K562 (cell line): ENCODE measurements at regions of chr6 and their contacts with region 1.

Region 1: GRCh38 chr6:11093589-11094410 is at the start of gene SMIM13:
- DNase-seq: peak; percentile 95 to 99 (median 96)
- ATAC-seq: peak; percentile 95
- H3K4me3 ChIP-seq: peak within 1 kb of the TSS; percentile 68
- H3K27ac ChIP-seq: peak within 1 kb of the TSS; percentile 91
- H3K4me1 ChIP-seq: peaks cover 12 to 15% of the 10 kb centered on the region in 2 experiments
- H3K27me3 ChIP-seq: no peaks in the 10 kb centered on the region
- CTCF ChIP-seq: peak; percentile 46 to 64 (median 57); a peak in 5 of 6 replicates
- EP300 ChIP-seq: no peak
- POLR2A ChIP-seq: peak; percentile 90
- RAD21 ChIP-seq: peak; percentile 5 to 31; a peak in 1 of 4 replicates
- polyA plus RNA-seq, gene SMIM13: 5.5 to 7.2 TPM

Region 2: DNA sequence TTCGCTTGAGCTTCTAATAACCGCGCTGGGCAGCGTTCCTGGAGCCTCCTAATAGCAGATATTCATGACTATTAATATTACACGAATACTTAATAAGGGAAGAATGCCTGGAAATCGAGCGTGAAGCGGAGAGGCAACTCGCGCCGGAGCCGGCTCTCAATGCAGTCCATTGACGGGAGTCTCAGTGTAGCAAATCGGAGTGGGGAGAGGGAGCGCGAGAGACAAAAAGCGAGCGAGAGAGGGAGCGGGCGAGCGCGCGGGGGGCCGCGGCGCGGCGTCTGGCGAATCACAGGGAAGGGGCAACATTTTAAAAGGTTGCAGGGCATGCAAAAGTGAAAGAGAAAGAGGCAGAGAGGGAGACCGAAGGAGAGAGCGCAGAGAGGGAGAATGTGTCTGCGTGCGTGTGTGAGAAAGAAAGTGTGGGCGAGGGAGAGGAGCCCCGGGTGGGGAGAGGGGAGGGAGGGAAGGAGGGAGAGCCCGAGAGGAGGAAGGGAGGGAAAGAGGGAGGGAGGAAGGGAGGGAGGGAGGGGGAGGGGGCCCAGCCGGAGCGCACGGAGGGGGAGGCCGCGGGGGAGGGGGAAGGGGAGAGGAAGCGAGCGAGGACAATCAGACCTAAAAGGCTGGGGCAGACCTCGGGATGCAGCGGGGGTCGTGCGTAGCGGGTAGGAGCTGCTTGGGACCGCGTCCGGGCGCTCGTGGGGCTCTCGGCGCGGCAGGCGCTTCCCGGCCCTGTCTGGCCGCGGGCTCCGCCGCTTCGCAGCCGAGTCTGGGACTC is 681.6 kb before region 1 on chr6:
- CTCF ChIA-PET with region 1: no interaction called
- POLR2A ChIA-PET with region 1: no interaction called
- in situ Hi-C with region 1: no loop called
- intact Hi-C with region 1: no loop called
- DNase-seq: peak in 1 of 4 experiments; percentile 31
- ATAC-seq: peak; percentile 65
- H3K4me3 ChIP-seq: peak overlapping the region; percentile 30
- H3K27ac ChIP-seq: no peak overlapping the region
- H3K4me1 ChIP-seq: peaks cover 0 to 45% of the 10 kb centered on the region in 2 experiments; a peak in 3 of 5 replicates
- H3K27me3 ChIP-seq: peaks cover 13 to 40% of the 10 kb centered on the region in 2 experiments; a peak in 4 of 5 replicates
- CTCF ChIP-seq: no peak
- EP300 ChIP-seq: no peak
- POLR2A ChIP-seq: no peak
- RAD21 ChIP-seq: no peak

Region 3: DNA sequence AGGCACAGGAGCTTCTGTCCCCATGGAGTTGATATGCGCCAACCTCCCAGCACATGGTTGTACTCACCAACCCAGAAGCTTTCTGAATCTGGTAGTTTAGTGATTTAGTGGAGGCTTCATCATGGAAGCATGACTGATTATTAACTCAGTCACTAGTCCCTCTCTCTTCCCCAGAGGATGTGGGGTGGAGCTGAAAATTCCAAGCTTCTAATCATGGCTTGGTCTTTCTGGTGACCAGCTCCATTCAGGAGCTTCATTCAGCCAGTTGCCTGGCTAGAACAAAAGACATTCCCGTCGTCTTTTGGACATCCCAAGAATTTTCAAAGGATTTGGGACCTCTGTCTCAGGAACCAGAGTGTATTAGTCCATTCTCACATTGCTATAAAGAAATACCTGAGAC is 13.5 kb before region 1 on chr6:
- CTCF ChIA-PET with region 1: no interaction called
- POLR2A ChIA-PET with region 1: interaction called, 16 read pairs
- in situ Hi-C with region 1: no loop called
- intact Hi-C with region 1: no loop called
- DNase-seq: no peak
- ATAC-seq: no peak
- H3K4me3 ChIP-seq: no peak overlapping the region
- H3K27ac ChIP-seq: no peak overlapping the region
- H3K4me1 ChIP-seq: no peaks in the 10 kb centered on the region; a peak in 1 of 5 replicates
- H3K27me3 ChIP-seq: no peaks in the 10 kb centered on the region
- CTCF ChIP-seq: no peak
- EP300 ChIP-seq: no peak
- POLR2A ChIP-seq: no peak
- RAD21 ChIP-seq: no peak

Region 4: DNA sequence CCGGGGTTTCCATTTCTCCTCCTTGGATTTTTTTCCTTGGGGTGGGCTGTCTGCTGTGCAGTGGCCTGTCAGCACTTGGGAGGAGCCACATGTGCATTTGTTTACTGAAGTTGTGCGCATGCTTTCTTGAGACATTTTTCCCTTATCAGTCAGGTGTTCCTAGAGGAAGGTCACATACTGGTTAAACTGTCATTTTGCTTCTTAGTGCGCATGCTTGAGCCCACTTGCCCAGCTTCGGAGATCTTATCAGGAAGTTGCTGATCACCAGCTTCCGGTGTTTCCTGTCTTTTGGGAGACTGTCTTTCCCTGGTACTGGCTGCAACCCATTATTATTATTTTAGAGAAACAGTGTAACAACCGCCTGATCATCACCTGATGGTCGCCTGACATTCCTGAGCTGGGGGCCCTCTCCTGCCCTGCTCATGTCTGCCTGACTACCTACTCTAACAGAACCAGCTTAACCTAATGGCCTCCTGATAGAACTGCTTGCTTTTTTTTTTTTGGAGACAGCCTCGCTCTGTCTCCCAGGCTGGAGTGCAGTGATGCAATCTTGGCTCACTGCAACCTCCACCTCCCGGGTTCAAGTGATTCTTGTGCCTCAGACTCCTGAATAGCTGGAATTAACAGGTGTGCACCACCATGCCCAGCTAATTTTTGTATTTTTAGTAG is 18.1 kb after region 1 on chr6:
- CTCF ChIA-PET with region 1: interaction called, 3 read pairs
- POLR2A ChIA-PET with region 1: interaction called, 24 read pairs
- in situ Hi-C with region 1: no loop called
- intact Hi-C with region 1: no loop called
- DNase-seq: peak; percentile 41 to 72 (median 50)
- ATAC-seq: peak; percentile 82
- H3K4me3 ChIP-seq: peak overlapping the region; percentile 9
- H3K27ac ChIP-seq: peak overlapping the region; percentile 32; the same call in 2 of the 3 replicates
- H3K4me1 ChIP-seq: peaks cover 12 to 21% of the 10 kb centered on the region in 2 experiments
- H3K27me3 ChIP-seq: no peaks in the 10 kb centered on the region
- CTCF ChIP-seq: no peak
- EP300 ChIP-seq: peak; percentile 49; the same call in 1 of the 2 replicates
- POLR2A ChIP-seq: no peak
- RAD21 ChIP-seq: no peak; a peak in 1 of 4 replicates

Region 5: DNA sequence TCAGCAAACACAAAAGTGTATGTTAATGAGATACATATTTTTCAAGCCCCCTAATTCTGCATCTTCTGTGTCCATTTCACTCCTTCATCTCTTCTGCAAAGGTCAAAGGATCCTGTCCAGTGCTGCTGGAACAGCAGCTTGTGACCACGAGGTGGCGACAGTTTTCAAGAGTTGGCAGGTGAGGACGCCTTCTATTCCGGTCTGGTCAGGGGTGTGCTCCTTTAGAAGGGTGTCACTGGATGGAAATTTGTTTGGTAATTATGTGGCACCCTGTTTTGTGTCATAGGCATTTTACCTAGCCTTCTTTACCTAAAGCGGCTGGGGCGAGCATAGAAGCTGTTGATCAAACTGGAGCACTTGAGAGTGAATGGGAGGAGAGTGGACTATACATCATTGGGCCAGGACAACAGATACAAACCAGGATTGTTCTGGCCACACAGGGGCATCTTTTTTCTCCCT is 50.6 kb after region 1 on chr6:
- CTCF ChIA-PET with region 1: interaction called, 6 read pairs
- POLR2A ChIA-PET with region 1: no interaction called
- in situ Hi-C with region 1: no loop called
- intact Hi-C with region 1: loop called (anchors 5 kb)
- DNase-seq: peak; percentile 81 to 88 (median 82)
- ATAC-seq: peak; percentile 97
- H3K4me3 ChIP-seq: no peak overlapping the region
- H3K27ac ChIP-seq: no peak overlapping the region
- H3K4me1 ChIP-seq: peaks cover 0 to 8% of the 10 kb centered on the region in 2 experiments; a peak in 3 of 5 replicates
- H3K27me3 ChIP-seq: peaks cover 0 to 17% of the 10 kb centered on the region in 2 experiments; a peak in 2 of 5 replicates
- CTCF ChIP-seq: peak; percentile 89 to 97 (median 96)
- EP300 ChIP-seq: no peak
- POLR2A ChIP-seq: no peak
- RAD21 ChIP-seq: peak; percentile 91 to 92